ENCODE measurements at regions of chr4 and their contacts with region 1.

Region 1: DNA sequence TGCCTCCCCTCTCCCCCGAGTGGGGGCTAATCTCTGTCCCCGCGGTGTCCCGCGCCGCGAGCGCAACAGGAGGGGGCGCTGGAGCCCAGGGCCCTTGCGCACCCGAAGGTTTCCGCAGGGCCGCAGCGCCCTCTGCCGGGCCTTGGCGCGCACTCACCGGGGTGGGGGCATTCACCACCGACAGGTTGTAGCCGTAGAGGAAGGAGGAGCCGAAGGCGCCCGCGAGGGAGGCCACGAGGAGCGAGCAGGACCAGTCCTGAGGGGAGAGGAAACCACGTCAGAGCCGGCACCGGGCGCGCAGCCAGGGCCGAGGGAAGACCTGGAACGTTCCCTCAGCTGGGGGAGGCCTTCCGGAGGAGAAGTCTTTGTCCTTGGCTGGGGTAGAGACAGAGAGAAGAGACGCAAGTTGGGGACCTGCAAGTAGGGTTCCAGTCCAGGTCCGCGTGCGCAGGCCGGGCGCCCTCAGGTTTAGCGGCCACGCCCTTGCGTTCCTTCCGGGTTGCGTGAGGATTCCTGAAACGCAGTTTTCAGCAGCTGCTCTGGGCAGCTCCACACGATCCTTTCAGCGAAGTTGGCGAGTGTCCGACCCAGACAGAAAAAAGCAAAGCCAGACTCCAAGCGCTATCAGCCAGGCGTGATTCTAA is 2.4 kb downstream of the SLC2A9 start:
- DNase-seq: peak; percentile 96
- H3K4me3 Mint-ChIP-seq: peak overlapping the region; percentile 85
- H3K27ac Mint-ChIP-seq: peak overlapping the region; percentile 84
- H3K4me1 Mint-ChIP-seq: peaks cover 5% of the 10 kb centered on the region
- H3K27me3 Mint-ChIP-seq: no peaks in the 10 kb centered on the region

Region 2: GRCh38 chr4:9762823-9763475 is 256.0 kb before region 1 on chr4:
- CTCF ChIA-PET with region 1: interaction called, 70 read pairs
- intact Hi-C with region 1: loop called (anchors 1 kb)
- DNase-seq: peak; percentile 63
- H3K4me3 Mint-ChIP-seq: no peak overlapping the region
- H3K27ac Mint-ChIP-seq: no peak overlapping the region
- H3K4me1 Mint-ChIP-seq: no peaks in the 10 kb centered on the region
- H3K27me3 Mint-ChIP-seq: peaks cover 16% of the 10 kb centered on the region

Region 3: DNA sequence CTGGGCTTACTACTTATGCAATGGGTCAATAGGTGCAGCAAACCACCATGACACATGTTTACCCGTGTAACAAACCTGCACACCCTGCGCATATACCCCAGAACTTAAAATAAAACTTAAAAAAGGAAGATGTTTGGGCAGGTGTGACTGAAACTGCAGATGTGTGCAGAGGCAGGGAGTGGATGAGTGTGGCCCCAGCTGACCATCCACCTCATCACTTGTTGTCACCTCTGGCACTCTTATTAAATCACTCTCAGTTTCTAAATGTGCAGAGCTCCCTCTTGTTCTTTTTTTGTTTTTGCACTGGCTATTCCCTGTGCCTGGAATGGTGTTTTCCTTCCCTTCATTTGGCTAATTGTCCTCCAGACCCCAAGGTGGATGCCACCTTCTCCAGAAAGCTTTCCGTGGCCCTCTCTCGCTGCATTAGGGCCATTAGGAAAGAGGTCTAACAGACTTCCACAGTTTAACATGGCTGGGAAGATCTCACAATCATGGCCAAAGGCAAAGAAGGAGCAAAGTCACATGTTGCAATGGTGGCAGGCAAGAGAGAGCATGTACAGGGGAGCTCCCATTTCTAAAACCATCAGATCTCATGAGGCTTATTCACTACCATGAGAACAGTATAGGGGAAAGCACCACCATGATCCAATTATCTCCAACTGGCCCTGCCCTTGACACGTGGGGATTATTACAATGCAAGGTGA is 56.2 kb before region 1 on chr4:
- CTCF ChIA-PET with region 1: no interaction called
- intact Hi-C with region 1: no loop called
- DNase-seq: no peak
- H3K4me3 Mint-ChIP-seq: no peak overlapping the region
- H3K27ac Mint-ChIP-seq: no peak overlapping the region
- H3K4me1 Mint-ChIP-seq: no peaks in the 10 kb centered on the region
- H3K27me3 Mint-ChIP-seq: no peaks in the 10 kb centered on the region

Region 4: DNA sequence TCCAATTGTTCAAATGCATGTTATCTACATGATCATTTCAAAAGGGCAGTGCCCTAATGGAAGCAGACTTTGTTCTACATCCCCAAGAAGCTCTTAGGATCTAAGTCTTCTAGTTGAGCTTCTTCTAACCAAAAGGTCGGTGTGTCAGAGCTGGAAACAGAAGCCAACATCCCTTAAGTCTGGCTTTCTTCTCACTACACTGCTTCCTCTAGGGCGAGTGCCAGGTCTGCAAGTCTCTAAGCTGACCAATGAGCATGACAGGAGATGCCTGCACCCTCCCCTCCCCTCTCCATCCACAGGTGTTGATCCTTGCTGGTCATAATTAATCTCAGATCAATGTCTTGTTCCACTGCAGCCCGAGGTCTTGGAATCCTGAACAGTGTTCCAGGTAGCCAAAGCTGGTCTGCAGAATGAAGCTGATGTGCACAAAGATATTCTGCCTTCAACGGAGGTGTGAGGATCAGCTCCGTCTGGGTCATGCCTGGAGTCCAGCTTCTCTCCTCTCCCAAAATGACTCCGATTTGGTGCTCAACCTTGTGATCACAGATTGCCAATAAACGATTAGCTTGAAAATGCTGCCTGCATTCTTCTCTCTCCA is 53.6 kb after region 1 on chr4:
- CTCF ChIA-PET with region 1: interaction called, 6 read pairs
- intact Hi-C with region 1: loop called (anchors 2 kb)
- DNase-seq: no peak
- H3K4me3 Mint-ChIP-seq: no peak overlapping the region
- H3K27ac Mint-ChIP-seq: peak overlapping the region; percentile 68
- H3K4me1 Mint-ChIP-seq: peaks cover 5% of the 10 kb centered on the region
- H3K27me3 Mint-ChIP-seq: no peaks in the 10 kb centered on the region

Region 5: DNA sequence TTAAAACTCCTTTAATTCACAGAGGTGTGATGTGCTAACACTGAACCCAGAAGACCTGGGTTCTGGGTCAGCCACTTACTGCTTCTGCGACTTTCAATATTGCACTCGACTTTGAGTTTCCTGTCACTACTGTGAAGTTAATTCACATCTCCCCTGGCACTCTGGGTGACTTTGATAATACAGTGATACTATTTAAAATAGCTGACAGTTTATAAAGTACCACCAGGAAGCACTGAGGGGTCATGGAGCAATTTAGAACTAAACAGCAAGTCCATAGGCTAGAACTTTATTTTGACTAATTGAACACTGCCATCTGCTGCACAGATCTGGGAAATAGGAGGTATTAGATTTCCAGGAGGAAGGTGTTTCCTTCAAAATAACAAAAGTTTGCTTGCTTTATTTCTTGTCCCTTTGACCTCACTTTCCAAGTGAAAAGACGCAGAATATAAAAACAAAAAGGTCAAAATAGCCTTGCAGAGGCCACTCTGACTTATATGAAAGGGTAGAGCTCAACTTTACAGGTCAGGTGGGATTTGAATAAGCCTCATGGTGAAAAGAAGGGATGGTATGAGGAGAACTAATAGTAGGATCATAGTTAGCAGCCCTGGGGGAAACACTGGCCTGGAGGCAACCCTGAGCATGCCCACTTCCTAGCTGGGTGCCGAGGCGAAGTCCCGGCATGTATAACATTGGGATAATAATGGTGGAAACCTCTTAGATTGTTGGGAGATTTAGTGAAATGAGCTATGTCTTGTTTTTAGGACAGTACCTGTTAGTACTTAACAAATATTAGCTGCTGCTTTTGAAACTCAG is 384.9 kb after region 1 on chr4:
- CTCF ChIA-PET with region 1: no interaction called
- intact Hi-C with region 1: loop called (anchors 1 kb)
- DNase-seq: peak; percentile 38
- H3K4me3 Mint-ChIP-seq: no peak overlapping the region
- H3K27ac Mint-ChIP-seq: no peak overlapping the region
- H3K4me1 Mint-ChIP-seq: no peaks in the 10 kb centered on the region
- H3K27me3 Mint-ChIP-seq: no peaks in the 10 kb centered on the region

Region 6: DNA sequence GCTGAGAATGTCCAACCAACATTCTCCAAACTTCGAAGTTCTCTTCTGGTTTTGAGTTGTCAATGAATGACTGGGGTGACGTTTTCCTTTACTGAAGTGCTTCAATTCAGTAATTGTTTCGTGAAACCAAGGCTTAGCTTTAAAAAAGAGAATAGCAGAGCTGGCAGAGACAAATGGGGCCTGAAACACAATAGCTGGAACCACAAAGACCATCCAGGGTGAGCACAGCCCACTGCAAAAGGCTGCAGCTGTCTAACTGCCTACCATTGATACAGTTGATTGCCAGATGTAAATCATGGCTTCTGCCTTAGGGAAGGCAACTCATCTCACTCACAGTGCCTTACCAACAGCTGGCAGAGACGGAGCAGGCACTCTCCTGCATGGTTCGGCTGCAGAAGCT is 517.0 kb after region 1 on chr4:
- CTCF ChIA-PET with region 1: interaction called, 5 read pairs
- intact Hi-C with region 1: loop called (anchors 5 kb)
- DNase-seq: no peak
- H3K4me3 Mint-ChIP-seq: no peak overlapping the region
- H3K27ac Mint-ChIP-seq: no peak overlapping the region
- H3K4me1 Mint-ChIP-seq: no peaks in the 10 kb centered on the region
- H3K27me3 Mint-ChIP-seq: no peaks in the 10 kb centered on the region

Measured in activated naive CD4-positive, alpha-beta T cell treated with anti-CD3 and anti-CD28 coated beads for 36 hours (primary cell).